ENCODE measurements at regions of chr1 and their contacts with region 1.

Region 1: DNA sequence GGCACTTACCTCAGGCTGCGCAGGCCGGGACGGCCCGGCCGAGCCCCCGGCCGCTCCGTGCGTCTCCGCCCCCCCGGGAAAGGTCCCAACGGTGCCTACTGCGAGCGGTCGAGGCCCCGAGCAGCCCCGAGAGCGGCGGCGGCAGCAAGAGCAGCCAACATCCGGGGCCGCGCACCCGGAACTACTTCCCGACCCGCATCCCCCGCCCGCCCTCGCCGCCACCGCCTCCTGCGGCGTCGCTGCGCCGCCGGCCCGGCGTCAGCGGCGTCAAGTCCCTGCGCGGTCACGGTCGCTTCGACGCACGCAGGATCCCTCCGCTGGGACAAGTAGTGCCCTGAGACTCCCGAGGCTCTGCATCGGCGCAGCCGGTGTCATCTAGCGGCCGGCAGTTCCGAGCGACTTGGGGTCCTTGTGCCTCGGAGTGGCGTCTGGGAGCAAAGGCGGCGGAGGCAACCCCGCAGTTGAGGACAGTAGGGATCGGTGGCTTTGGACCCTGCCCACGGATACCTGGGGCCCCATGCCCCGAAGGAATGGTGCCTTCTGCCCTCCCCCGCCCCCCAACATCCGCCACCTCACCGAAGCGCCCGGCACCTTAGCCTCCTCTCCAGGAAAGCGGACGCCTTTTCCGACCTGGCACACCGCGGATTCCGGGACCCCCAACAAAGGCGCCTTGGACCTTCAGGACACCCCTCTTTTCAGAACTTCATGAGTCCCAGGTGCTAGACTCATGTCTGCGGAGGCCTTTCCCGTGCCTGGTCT is at the start of gene FOXJ3:
- DNase-seq: peak; percentile 87 to 99 (median 92)
- ATAC-seq: peak; percentile 93
- H3K4me3 ChIP-seq: peak within 1 kb of the TSS; percentile 88
- H3K4me3 Mint-ChIP-seq: peak within 1 kb of the TSS; percentile 97
- H3K27ac ChIP-seq: peak within 1 kb of the TSS; percentile 84 to 86
- H3K27ac Mint-ChIP-seq: peak within 1 kb of the TSS; percentile 86
- H3K4me1 ChIP-seq: peaks cover 17% of the 10 kb centered on the region
- H3K4me1 Mint-ChIP-seq: peaks cover 55% of the 10 kb centered on the region
- H3K27me3 ChIP-seq: no peaks in the 10 kb centered on the region
- H3K27me3 Mint-ChIP-seq: no peaks in the 10 kb centered on the region
- CTCF ChIP-seq: no peak
- total RNA-seq, gene FOXJ3: 73.1 to 74.9 TPM

Region 2: DNA sequence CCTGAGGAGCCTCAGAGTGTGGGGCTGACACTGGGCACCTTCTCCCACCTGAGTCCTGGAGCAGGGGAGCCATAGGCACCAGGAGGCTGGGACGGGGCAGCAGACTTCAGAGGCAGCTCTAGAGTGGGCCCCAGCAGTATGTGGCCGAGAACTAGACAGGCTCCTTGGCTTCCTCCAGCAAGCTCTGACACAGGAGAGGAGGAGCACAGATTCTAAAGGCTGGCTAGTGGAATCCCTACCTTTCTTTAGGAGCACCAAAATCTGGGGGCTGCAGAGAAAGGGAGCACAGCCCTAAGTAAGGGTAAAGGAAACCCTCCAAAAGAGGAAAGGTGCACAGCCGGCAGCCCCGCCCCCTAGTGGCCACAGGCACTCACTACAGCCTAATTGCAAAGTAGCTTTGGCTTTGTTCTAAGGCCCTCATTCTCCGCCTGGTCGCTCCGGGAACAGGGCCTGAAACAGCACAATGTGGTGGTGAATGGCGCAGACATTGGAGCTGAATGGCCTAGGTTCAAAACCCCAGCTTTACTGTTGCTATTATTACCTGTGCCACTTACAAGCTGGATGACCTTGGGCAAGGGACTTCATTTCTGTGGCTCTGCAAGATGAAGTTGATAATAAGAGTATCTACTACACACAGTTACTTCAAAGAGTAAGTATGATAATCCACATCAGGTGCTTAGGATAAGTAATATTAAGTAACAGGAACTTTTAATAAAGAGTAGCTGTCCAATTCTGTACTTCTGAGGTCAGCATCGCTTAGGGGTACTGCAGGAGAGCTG is 161.9 kb before region 1 on chr1:
- CTCF ChIA-PET with region 1: interaction called, 5 read pairs
- POLR2A ChIA-PET with region 1: no interaction called
- intact Hi-C with region 1: loop called (anchors 5 to 10 kb)
- DNase-seq: peak; percentile 46 to 78 (median 60)
- ATAC-seq: peak; percentile 77
- H3K4me3 ChIP-seq: no peak overlapping the region
- H3K4me3 Mint-ChIP-seq: no peak overlapping the region
- H3K27ac ChIP-seq: no peak overlapping the region
- H3K27ac Mint-ChIP-seq: no peak overlapping the region
- H3K4me1 ChIP-seq: peaks cover 5% of the 10 kb centered on the region
- H3K4me1 Mint-ChIP-seq: no peaks in the 10 kb centered on the region
- H3K27me3 ChIP-seq: no peaks in the 10 kb centered on the region
- H3K27me3 Mint-ChIP-seq: no peaks in the 10 kb centered on the region
- CTCF ChIP-seq: peak; percentile 97

Region 3: GRCh38 chr1:42430286-42431135 is 95.3 kb after region 1 on chr1:
- CTCF ChIA-PET with region 1: no interaction called
- POLR2A ChIA-PET with region 1: no interaction called
- intact Hi-C with region 1: no loop called
- DNase-seq: no peak
- ATAC-seq: no peak
- H3K4me3 ChIP-seq: no peak overlapping the region
- H3K4me3 Mint-ChIP-seq: no peak overlapping the region
- H3K27ac ChIP-seq: no peak overlapping the region
- H3K27ac Mint-ChIP-seq: no peak overlapping the region
- H3K4me1 ChIP-seq: no peaks in the 10 kb centered on the region
- H3K4me1 Mint-ChIP-seq: no peaks in the 10 kb centered on the region
- H3K27me3 ChIP-seq: no peaks in the 10 kb centered on the region
- H3K27me3 Mint-ChIP-seq: no peaks in the 10 kb centered on the region
- CTCF ChIP-seq: no peak

Region 4: GRCh38 chr1:42456010-42456758 is 121.0 kb after region 1 on chr1 and contains the starts of genes PPCS and ZMYND12:
- CTCF ChIA-PET with region 1: interaction called, 3 read pairs
- POLR2A ChIA-PET with region 1: interaction called, 4 read pairs
- intact Hi-C with region 1: loop called in 1 of 2 experiments (anchors 2 kb)
- DNase-seq: peak; percentile 84 to 97 (median 89)
- ATAC-seq: peak; percentile 90
- H3K4me3 ChIP-seq: peak within 1 kb of the TSS; percentile 70
- H3K4me3 Mint-ChIP-seq: peak within 1 kb of the TSS; percentile 95
- H3K27ac ChIP-seq: peak within 1 kb of the TSS; percentile 98 to 99
- H3K27ac Mint-ChIP-seq: peak within 1 kb of the TSS; percentile 96
- H3K4me1 ChIP-seq: peaks cover 24% of the 10 kb centered on the region
- H3K4me1 Mint-ChIP-seq: peaks cover 56% of the 10 kb centered on the region
- H3K27me3 ChIP-seq: no peaks in the 10 kb centered on the region
- H3K27me3 Mint-ChIP-seq: no peaks in the 10 kb centered on the region
- CTCF ChIP-seq: peak; percentile 28
- total RNA-seq, gene PPCS: 39.7 to 40.4 TPM
- total RNA-seq, gene ZMYND12: 0.58 to 0.70 TPM

Region 5: GRCh38 chr1:42479599-42479998 is 144.4 kb after region 1 on chr1:
- CTCF ChIA-PET with region 1: no interaction called
- POLR2A ChIA-PET with region 1: no interaction called
- intact Hi-C with region 1: no loop called
- DNase-seq: no peak
- ATAC-seq: no peak
- H3K4me3 ChIP-seq: no peak overlapping the region
- H3K4me3 Mint-ChIP-seq: no peak overlapping the region
- H3K27ac ChIP-seq: no peak overlapping the region
- H3K27ac Mint-ChIP-seq: no peak overlapping the region
- H3K4me1 ChIP-seq: no peaks in the 10 kb centered on the region
- H3K4me1 Mint-ChIP-seq: no peaks in the 10 kb centered on the region
- H3K27me3 ChIP-seq: no peaks in the 10 kb centered on the region
- H3K27me3 Mint-ChIP-seq: no peaks in the 10 kb centered on the region
- CTCF ChIP-seq: no peak

Region 6: GRCh38 chr1:42646056-42646455 is 310.8 kb after region 1 on chr1:
- CTCF ChIA-PET with region 1: no interaction called
- POLR2A ChIA-PET with region 1: no interaction called
- intact Hi-C with region 1: no loop called
- DNase-seq: no peak
- ATAC-seq: no peak
- H3K4me3 ChIP-seq: no peak overlapping the region
- H3K4me3 Mint-ChIP-seq: no peak overlapping the region
- H3K27ac ChIP-seq: no peak overlapping the region
- H3K27ac Mint-ChIP-seq: no peak overlapping the region
- H3K4me1 ChIP-seq: no peaks in the 10 kb centered on the region
- H3K4me1 Mint-ChIP-seq: no peaks in the 10 kb centered on the region
- H3K27me3 ChIP-seq: no peaks in the 10 kb centered on the region
- H3K27me3 Mint-ChIP-seq: no peaks in the 10 kb centered on the region
- CTCF ChIP-seq: no peak

Region 7: DNA sequence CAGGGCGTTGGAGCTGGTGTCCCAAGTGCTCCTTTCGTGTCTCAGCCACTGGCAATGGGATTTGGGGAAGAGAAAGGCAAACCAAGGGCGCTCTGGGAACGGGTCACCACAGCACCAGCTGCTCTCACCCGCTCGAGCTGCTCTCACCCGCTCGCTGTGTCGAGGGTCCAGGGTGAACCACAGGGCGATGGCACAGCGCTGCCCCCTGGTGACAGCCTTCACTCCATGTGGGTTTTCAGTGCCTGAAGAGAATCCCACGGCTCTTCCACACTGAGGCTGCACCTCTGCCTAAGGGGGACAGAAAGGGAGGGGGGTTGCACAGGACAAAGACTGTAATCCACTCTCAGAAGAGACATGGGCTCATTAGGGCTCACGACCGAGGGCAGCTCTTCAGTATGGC is 411.9 kb after region 1 on chr1:
- CTCF ChIA-PET with region 1: no interaction called
- POLR2A ChIA-PET with region 1: no interaction called
- intact Hi-C with region 1: loop called in 1 of 2 experiments (anchors 5 kb)
- DNase-seq: peak in 13 of 14 experiments; percentile 15 to 68 (median 41)
- ATAC-seq: peak; percentile 48
- H3K4me3 ChIP-seq: no peak overlapping the region
- H3K4me3 Mint-ChIP-seq: no peak overlapping the region
- H3K27ac ChIP-seq: no peak overlapping the region
- H3K27ac Mint-ChIP-seq: no peak overlapping the region
- H3K4me1 ChIP-seq: no peaks in the 10 kb centered on the region
- H3K4me1 Mint-ChIP-seq: no peaks in the 10 kb centered on the region
- H3K27me3 ChIP-seq: no peaks in the 10 kb centered on the region
- H3K27me3 Mint-ChIP-seq: no peaks in the 10 kb centered on the region
- CTCF ChIP-seq: peak; percentile 69

Region 8: GRCh38 chr1:42958488-42959319 is 623.5 kb after region 1 on chr1 and contains the start of gene SLC2A1:
- CTCF ChIA-PET with region 1: no interaction called
- POLR2A ChIA-PET with region 1: no interaction called
- intact Hi-C with region 1: loop called in 1 of 2 experiments (anchors 10 kb)
- DNase-seq: peak; percentile 89 to 98 (median 94)
- ATAC-seq: peak; percentile 90
- H3K4me3 ChIP-seq: peak within 1 kb of the TSS; percentile 89
- H3K4me3 Mint-ChIP-seq: peak within 1 kb of the TSS; percentile 100
- H3K27ac ChIP-seq: peak within 1 kb of the TSS; percentile 73 to 76
- H3K27ac Mint-ChIP-seq: peak within 1 kb of the TSS; percentile 96
- H3K4me1 ChIP-seq: peaks cover 54% of the 10 kb centered on the region
- H3K4me1 Mint-ChIP-seq: peaks cover 60% of the 10 kb centered on the region
- H3K27me3 ChIP-seq: no peaks in the 10 kb centered on the region
- H3K27me3 Mint-ChIP-seq: no peaks in the 10 kb centered on the region
- CTCF ChIP-seq: no peak
- total RNA-seq, gene SLC2A1: 78.6 to 80.9 TPM

Region 9: DNA sequence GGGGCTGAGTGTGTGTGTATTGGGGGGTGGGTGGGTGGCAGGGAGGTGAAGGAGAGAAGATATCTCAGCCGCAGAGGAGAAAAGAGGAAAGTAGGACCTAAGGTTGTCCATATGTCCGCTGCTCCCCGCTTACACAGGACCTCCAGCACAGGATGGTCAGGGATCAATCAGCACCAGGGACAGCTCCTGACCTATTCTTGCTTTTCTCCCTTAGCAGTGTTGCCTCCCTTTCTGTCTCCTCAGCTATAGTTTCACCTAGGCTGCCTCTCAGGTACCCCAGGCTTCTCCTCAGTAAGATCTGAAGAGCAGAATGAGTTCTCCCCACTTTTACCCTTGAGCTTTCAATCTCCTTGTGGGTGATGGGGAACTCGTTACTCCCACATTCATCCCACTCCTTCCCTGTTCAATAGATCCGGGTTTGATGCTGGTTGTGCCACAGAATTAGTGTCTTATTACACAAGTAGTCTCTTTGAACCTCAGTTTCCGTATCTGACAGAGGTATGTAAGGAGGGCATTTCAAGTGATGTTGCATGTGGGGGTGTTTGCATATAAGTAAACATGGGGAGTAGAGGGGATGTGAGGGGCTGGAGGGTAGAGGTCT is 1633.2 kb after region 1 on chr1:
- CTCF ChIA-PET with region 1: no interaction called
- POLR2A ChIA-PET with region 1: no interaction called
- intact Hi-C with region 1: no loop called
- DNase-seq: peak in 4 of 14 experiments; percentile 18 to 56 (median 45)
- ATAC-seq: no peak
- H3K4me3 ChIP-seq: no peak overlapping the region
- H3K4me3 Mint-ChIP-seq: peak overlapping the region; percentile 20
- H3K27ac ChIP-seq: no peak overlapping the region
- H3K27ac Mint-ChIP-seq: no peak overlapping the region
- H3K4me1 ChIP-seq: peaks cover 24% of the 10 kb centered on the region
- H3K4me1 Mint-ChIP-seq: peaks cover 27% of the 10 kb centered on the region
- H3K27me3 ChIP-seq: no peaks in the 10 kb centered on the region
- H3K27me3 Mint-ChIP-seq: no peaks in the 10 kb centered on the region
- CTCF ChIP-seq: no peak